ENCODE measurements at regions of chr10 and their contacts with region 1.

Region 1: GRCh38 chr10:51389415-51390321 is 309.7 kb downstream of the CSTF2T start:
- DNase-seq: peak; percentile 45 to 66
- H3K4me3 ChIP-seq: no peak overlapping the region
- H3K4me1 ChIP-seq: no peaks in the 10 kb centered on the region
- H3K27me3 ChIP-seq: no peaks in the 10 kb centered on the region; the same call in 1 of the 2 replicates

Region 2: DNA sequence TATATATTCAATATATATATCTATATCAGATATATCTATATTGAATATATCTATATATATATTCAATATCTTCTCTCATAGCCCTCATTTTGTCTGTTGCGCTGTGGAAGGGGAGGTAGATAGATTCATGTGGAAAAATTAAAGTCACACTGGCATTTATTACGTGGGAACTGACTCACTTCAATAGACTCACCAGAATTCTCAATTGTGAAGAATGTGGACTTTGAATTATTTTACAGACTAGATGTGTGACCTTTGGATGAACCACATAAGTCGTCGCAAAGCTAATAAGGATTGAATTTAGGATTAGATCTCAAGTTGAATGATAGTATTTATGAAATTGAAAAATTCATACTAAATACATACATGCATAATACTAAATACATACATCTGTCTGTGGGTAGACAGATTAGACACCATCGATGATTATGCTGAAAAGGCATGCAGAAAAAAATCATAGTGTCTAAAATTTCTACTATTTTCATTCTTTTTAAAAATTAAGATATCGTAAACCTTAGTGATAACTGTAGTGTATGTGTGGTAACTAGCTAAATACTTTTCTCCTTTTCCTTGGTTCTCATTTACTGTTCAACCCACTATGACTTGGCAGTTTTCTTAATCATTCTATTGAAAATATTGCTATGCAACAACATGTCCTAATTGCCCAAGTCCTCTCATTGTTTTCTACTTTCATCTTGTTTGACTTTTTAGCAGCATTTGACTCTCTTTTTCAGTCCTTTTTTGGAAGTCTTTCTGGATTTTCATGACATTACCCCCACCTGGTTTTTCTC is 442.5 kb before region 1 on chr10:
- in situ Hi-C with region 1: no loop called
- DNase-seq: no peak
- H3K4me3 ChIP-seq: no peak overlapping the region
- H3K4me1 ChIP-seq: no peaks in the 10 kb centered on the region
- H3K27me3 ChIP-seq: no peaks in the 10 kb centered on the region; the same call in 1 of the 2 replicates

Region 3: GRCh38 chr10:51675088-51675487 is 285.4 kb after region 1 on chr10:
- in situ Hi-C with region 1: no loop called
- DNase-seq: no peak
- H3K4me3 ChIP-seq: no peak overlapping the region
- H3K4me1 ChIP-seq: no peaks in the 10 kb centered on the region
- H3K27me3 ChIP-seq: peaks cover 7% of the 10 kb centered on the region; the same call in 1 of the 2 replicates

Region 4: GRCh38 chr10:52215745-52216361 is 826.2 kb after region 1 on chr10:
- in situ Hi-C with region 1: loop called (anchors 25 kb)
- DNase-seq: peak; percentile 54 to 77
- H3K4me3 ChIP-seq: no peak overlapping the region
- H3K4me1 ChIP-seq: no peaks in the 10 kb centered on the region
- H3K27me3 ChIP-seq: peaks cover 3% of the 10 kb centered on the region; the same call in 1 of the 2 replicates

Measured in HAP-1 (cell line).